Posterior cingulate gyrus (tissue), 11 donors: ENCODE measurements at regions of chr14 and their contacts with region 1.

Region 1: DNA sequence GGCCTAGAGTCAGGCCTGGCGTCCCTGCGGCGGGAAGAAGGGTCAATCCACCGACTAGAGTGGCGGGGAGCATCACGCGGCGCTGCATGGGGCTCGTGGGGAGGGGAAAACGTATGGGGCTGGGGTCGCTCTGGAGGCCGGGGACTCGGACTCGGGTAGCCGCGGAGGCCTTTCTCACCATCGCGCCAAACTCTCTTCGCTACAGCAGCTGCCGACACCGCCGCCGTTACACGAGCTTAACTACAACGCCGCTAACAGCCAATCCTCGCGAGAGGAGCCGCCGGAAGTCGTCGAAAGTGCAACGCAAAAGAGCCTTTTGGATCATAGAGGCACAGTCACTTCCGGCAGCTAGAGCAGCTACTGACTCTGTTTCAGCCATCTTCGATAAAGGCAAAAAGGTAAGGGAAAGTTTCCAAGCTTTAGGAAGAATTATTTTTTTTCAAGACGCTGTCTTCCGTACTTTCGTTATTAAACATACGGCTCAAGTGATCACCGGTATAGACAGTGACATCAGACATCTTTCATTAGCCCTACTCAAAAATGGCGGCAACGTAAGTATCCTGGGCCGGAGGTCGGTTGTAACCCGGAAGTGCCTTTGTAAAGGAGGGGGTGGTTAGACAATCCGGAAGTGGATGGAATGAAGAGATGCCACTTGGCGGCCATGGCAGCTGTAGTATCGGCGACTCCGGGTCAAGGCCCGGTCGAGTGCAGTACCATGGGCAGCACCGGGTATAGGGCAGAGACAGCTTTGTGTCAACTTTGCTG is at the starts of genes ERH and SLC39A9:
- DNase-seq: peak; percentile 92 to 99 (median 97)

Region 2: DNA sequence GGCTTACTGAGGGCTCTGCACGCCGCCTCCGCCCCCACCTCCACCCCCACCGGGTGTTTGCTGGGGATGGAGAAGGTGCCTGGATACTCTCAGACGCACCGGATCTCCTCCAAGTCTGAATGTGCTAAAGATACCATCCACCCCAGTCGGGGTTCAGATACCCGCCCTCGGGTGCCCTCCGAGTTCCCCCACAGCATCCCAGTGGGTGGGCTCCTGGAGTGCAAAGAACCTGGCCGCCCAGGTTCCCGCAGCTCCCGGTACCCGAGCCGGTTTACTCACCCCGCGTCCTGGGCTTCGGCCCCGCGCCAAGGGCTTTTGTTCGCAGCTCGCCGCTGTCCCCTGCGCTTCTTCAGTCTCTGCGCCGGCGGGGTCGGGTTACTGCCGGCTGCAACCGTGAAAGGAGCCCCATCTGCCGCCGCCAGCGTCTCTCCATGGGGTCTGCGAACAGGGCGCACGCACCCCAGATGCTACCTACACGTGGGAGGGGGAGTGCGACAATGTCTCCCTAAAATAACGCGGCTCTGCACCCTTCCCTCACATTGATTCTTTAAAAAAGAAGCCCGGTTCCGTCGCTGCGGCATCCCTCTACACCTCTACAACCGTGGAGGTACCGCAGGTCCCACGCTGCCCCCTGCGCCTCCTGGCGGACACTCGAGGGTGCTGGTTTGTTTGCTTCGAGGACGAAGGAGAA is 176.2 kb after region 1 on chr14 and contains the start of gene CCDC177:
- intact Hi-C with region 1: no loop called
- DNase-seq: peak; percentile 47 to 97 (median 78)

Region 3: DNA sequence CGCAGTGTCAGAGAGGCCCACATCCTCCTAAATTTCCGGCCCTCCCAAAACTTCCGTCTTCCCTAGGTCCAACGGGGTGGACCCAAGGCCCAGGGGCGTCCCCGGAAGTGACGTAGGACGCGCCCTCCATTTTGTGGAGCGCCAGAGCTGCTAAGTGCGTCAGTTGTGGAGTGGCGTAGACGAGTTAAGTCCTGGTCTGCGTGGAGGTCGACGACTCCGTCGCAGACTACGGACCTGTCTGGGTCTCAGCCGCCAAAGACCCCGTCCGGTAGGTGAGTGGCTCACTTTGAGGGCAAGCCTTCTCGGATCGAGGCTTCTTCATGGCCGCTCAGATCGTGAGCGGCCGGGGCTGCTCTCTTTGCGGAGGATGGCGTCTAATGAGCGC is 368.7 kb after region 1 on chr14 and contains the start of gene SRSF5:
- intact Hi-C with region 1: loop called (anchors 5 kb)
- DNase-seq: peak; percentile 93 to 100 (median 96)